Gastrocnemius medialis (tissue), 4 donors: ENCODE measurements at regions of chr17 and their contacts with region 1.

Region 1: GRCh38 chr17:44689477-44690217 is at the start of gene CCDC43:
- DNase-seq: peak; percentile 75 to 84
- ATAC-seq: peak; percentile 91 to 92
- H3K4me3 ChIP-seq: peak within 1 kb of the TSS; percentile 74 to 96 (median 82)
- H3K27ac ChIP-seq: peak within 1 kb of the TSS; percentile 76 to 87 (median 83)
- H3K4me1 ChIP-seq: peaks cover 14 to 36% of the 10 kb centered on the region in 2 donors
- H3K27me3 ChIP-seq: no peaks in the 10 kb centered on the region
- CTCF ChIP-seq: no peak
- POLR2A ChIP-seq: peak; percentile 12 to 34
- total RNA-seq, gene CCDC43: 44.3 to 54.3 (median 51.5) TPM

Region 2: GRCh38 chr17:44587339-44587738 is 102.3 kb before region 1 on chr17:
- in situ Hi-C with region 1: no loop called
- intact Hi-C with region 1: no loop called
- DNase-seq: no peak
- ATAC-seq: no peak
- H3K4me3 ChIP-seq: no peak overlapping the region
- H3K27ac ChIP-seq: no peak overlapping the region
- H3K4me1 ChIP-seq: no peaks in the 10 kb centered on the region
- H3K27me3 ChIP-seq: peaks cover 0 to 1% (median 0%) of the 10 kb centered on the region in 3 donors
- CTCF ChIP-seq: no peak
- POLR2A ChIP-seq: no peak

Region 3: DNA sequence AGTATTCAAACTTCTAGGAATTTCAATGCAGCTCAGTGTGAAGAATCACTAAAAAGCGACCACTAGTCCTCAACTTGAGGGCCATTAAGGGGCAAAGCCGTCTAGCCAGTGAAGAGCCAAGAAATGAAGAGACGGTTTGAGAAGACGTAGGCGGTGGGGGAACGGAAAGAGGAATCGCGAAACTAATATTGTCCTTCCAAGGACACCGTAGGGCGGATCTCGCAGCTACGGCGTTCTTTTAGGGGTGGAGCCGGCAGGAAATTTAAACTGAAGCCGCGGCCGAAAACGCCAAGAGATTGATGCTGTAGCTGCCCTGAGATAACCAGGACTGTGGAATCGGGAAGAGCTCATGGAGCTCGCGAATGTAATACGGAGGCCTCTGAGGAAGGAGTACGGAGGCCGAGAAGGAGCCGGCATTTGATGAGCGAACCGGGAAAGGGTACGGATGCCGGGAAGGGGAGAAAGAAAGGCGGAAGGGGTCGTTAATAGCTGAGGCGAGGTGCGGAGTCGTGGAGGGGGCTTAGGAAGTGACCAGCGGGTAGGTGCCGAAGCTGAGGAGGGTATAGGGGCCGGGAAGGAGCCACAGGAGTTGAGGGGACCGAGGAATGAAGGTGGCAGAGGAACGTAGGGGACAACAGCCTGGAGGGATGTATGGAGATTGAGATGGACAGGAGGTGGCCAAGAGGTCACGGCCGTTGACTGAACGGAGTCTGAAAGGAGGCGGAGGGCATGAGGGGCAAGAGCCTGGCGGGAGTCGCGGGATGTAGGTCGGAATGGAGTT is 18.9 kb after region 1 on chr17 and contains the start of gene DBF4B:
- in situ Hi-C with region 1: no loop called
- intact Hi-C with region 1: loop called (anchors 1 kb)
- DNase-seq: peak; percentile 67 to 76
- ATAC-seq: peak; percentile 88 to 94
- H3K4me3 ChIP-seq: peak within 1 kb of the TSS; percentile 64 to 88 (median 82)
- H3K27ac ChIP-seq: peak within 1 kb of the TSS; percentile 78 to 86 (median 84)
- H3K4me1 ChIP-seq: peaks cover 10 to 11% of the 10 kb centered on the region in 2 donors
- H3K27me3 ChIP-seq: no peaks in the 10 kb centered on the region
- CTCF ChIP-seq: peak in 2 of 5 experiments; percentile 67 to 81
- POLR2A ChIP-seq: no peak
- total RNA-seq, gene DBF4B: 0.63 to 2.9 (median 1.7) TPM